H1 (cell line): ENCODE measurements at regions of chr19 and their contacts with region 1.

Region 1: DNA sequence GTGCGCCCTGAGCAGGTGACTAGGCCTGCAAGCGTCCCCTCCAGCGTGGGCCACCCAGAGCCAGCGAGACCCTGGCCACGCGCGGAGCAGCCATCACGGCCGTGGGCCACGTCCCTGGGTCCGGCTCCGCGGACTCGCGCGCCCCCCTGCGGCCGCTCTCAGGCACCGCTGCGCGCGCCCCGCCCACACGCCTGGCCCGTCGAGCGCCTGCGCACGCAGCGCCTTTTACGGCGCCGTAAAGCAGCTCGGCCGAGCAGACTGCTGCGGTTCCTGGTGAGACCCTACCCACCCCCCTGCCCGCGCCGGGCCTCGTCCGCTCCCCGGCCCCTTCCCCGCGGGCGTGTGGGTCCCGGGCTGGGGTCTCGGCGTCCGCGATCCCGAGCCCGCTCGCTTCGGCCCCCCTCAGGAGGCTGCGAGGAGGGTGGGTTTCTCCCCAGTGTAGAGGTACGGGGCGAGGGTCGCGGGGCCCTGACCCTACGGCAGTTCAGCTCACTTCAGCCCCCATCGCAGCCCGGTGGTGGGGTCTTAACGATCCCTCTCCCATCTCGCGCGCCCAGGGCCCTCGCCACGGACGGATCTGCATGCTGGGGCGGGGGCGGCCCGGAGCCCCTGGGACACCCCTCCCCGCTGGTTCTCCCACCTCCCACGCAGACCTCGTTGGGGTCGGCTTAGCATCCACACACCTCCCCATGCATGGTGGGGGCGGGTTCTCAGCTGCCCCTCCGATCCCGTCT is at the start of gene TRAPPC5:
- DNase-seq: peak; percentile 41 to 93
- H3K4me3 ChIP-seq: peak within 1 kb of the TSS; percentile 53 to 98 (median 80)
- H3K27ac ChIP-seq: peak within 1 kb of the TSS; percentile 34; the same call in 1 of the 2 replicates
- H3K4me1 ChIP-seq: peaks cover 0 to 6% (median 4%) of the 10 kb centered on the region in 4 experiments; a peak in 5 of 7 replicates
- H3K27me3 ChIP-seq: peaks cover 0 to 8% (median 3%) of the 10 kb centered on the region in 4 experiments; a peak in 2 of 7 replicates
- CTCF ChIP-seq: peak; percentile 89 to 93 (median 91)
- EP300 ChIP-seq: peak in 1 of 2 experiments; percentile 27; a peak in 1 of 3 replicates
- POLR2A ChIP-seq: no peak; a peak in 1 of 3 replicates
- RAD21 ChIP-seq: peak; percentile 70 to 88
- total RNA-seq, gene TRAPPC5: 99.7 and 109 TPM in 2 replicates

Region 2: DNA sequence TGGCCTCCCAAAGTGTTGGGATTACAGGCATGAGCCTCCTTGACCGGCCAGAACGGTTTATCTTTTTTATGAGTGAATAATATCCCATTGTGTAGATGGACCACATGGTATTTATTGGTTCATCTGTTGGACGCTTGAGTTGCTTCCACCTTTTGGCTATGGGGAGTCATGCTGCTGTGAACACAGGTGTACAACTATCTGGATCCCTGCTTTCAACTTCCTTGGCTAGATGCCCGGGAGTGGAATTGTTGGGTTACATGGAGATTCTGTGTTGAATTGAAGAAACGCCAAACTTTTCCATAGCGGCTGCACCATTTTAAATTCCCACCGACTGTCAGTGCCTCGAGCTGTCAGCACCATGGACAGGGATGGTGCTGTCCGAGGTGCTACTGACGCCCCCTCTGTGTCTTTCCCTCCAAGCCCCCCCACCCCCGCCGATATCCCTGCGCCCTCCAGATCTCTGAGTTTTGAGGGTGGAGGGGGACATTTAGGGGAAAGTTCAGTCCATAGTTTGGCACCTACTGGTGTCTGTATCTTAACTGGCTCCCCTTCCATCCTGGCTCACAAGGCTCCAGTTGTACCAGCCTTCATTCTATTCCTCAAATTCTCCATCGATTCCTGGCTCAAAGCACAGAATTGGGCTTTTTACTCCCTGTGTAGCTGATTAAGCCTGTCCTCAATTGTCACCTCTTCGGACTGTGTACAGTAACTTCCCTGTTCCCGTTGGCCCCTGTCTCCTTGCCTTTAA is 118.0 kb before region 1 on chr19:
- CTCF ChIA-PET with region 1: interaction called, 21 read pairs
- POLR2A ChIA-PET with region 1: no interaction called
- DNase-seq: peak in 1 of 2 experiments; percentile 75
- H3K4me3 ChIP-seq: no peak overlapping the region
- H3K27ac ChIP-seq: no peak overlapping the region
- H3K4me1 ChIP-seq: no peaks in the 10 kb centered on the region
- H3K27me3 ChIP-seq: no peaks in the 10 kb centered on the region
- CTCF ChIP-seq: no peak
- EP300 ChIP-seq: no peak
- POLR2A ChIP-seq: no peak
- RAD21 ChIP-seq: no peak

Region 3: DNA sequence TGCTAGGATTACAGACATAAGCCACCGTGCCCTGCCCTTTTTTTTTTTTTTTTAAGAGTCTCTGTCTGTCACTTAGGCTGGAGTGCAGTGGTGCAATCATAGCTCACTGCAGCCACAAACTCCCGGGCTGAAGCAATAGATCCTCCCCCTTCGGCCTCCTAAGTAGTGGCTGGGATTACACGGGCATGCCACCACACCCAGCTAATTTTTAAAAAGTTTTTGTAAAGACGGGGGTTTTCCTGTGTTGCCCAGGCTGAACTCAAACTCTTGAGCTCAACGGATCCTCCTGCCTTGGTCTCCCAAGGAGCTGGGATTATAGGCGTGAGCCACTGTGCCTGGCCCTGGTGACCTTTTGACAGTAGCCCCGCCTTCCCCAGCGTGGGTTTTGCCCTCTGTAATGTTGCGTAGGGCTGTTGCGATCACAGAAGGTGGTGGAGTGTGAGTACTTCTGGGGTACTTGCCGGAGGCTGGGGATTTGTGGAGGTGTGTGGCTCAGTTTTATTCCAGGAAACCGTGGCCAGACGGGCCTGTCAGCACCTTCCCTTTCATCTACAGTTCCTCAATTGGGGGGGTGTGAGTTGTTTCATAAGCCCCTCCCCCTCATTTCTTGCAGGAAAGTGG is 23.5 kb before region 1 on chr19:
- CTCF ChIA-PET with region 1: interaction called, 13 read pairs
- POLR2A ChIA-PET with region 1: interaction called, 3 read pairs
- DNase-seq: no peak
- H3K4me3 ChIP-seq: no peak overlapping the region
- H3K27ac ChIP-seq: no peak overlapping the region
- H3K4me1 ChIP-seq: peaks cover 0 to 2% (median 0%) of the 10 kb centered on the region in 4 experiments; a peak in 3 of 7 replicates
- H3K27me3 ChIP-seq: peaks cover 2 to 10% (median 4%) of the 10 kb centered on the region in 4 experiments; a peak in 6 of 7 replicates
- CTCF ChIP-seq: no peak
- EP300 ChIP-seq: no peak
- POLR2A ChIP-seq: no peak
- RAD21 ChIP-seq: no peak

Region 4: DNA sequence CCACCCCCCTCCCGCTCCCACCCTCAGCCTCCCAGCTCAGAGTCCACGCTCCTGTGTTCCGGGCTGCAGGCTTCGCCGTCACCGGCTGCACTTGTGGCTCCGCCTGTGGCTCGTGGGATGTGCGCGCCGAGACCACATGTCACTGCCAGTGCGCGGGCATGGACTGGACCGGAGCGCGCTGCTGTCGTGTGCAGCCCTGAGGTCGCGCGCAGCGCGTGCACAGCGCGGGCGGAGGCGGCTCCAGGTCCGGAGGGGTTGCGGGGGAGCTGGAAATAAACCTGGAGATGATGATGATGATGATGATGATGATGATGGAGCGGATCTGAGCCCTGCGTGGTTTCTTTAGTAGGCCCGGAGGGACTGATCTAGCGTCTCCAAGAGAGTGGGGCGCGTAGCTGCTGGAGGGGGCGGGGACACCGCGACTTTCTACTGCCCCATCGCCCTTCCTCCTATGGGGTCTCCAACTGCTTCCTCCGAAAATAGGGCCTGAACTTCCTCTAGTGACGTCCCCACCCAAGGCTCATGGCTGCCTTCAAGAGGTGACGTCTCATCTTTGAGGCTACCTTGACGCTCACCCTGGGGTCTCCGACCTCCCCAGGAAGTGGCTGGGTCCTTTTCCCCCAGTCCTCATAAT is 10.5 kb before region 1 on chr19:
- CTCF ChIA-PET with region 1: interaction called, 32 read pairs
- POLR2A ChIA-PET with region 1: interaction called, 6 read pairs
- DNase-seq: peak in 1 of 2 experiments; percentile 64
- H3K4me3 ChIP-seq: peak overlapping the region; percentile 2 to 70 (median 48)
- H3K27ac ChIP-seq: no peak overlapping the region
- H3K4me1 ChIP-seq: peaks cover 0 to 3% (median 1%) of the 10 kb centered on the region in 4 experiments; a peak in 1 of 7 replicates
- H3K27me3 ChIP-seq: peaks cover 0 to 18% (median 11%) of the 10 kb centered on the region in 4 experiments; a peak in 4 of 7 replicates
- CTCF ChIP-seq: no peak
- EP300 ChIP-seq: no peak
- POLR2A ChIP-seq: no peak
- RAD21 ChIP-seq: no peak

Region 5: DNA sequence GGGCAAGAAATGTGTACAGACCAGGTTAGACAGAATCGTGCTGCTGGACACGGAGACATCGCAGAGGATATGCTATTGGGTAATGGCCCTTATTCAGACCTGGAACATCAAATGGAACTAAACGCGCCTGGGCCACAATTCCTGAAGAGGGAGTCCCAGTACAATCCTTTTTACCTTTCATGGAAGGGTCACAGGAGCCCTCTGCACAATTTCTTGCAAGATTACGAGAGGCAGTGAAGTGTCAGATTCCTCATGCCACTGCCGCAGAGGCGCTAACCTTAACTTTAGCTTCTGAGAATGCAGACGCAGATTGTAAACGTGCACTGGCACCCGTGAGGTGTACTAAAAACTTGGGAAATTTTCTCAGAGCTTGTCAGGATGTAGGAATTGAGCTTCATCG is 100.4 kb after region 1 on chr19:
- CTCF ChIA-PET with region 1: interaction called, 12 read pairs
- POLR2A ChIA-PET with region 1: no interaction called
- DNase-seq: no peak
- H3K4me3 ChIP-seq: no peak overlapping the region
- H3K27ac ChIP-seq: no peak overlapping the region
- H3K4me1 ChIP-seq: peaks cover 0 to 2% (median 1%) of the 10 kb centered on the region in 4 experiments; a peak in 1 of 7 replicates
- H3K27me3 ChIP-seq: no peaks in the 10 kb centered on the region; a peak in 1 of 7 replicates
- CTCF ChIP-seq: no peak; a peak in 1 of 4 replicates
- EP300 ChIP-seq: no peak
- POLR2A ChIP-seq: no peak
- RAD21 ChIP-seq: peak; percentile 18 to 39; a peak in 3 of 4 replicates

Region 6: GRCh38 chr19:7799640-7800355 is 119.0 kb after region 1 on chr19:
- CTCF ChIA-PET with region 1: interaction called, 36 read pairs
- POLR2A ChIA-PET with region 1: interaction called, 3 read pairs
- DNase-seq: peak; percentile 41 to 88
- H3K4me3 ChIP-seq: peak overlapping the region; percentile 23 to 55 (median 32); a peak in 7 of 8 replicates
- H3K27ac ChIP-seq: no peak overlapping the region
- H3K4me1 ChIP-seq: peaks cover 0 to 3% (median 1%) of the 10 kb centered on the region in 4 experiments; a peak in 2 of 7 replicates
- H3K27me3 ChIP-seq: peaks cover 0 to 2% (median 0%) of the 10 kb centered on the region in 4 experiments; a peak in 1 of 7 replicates
- CTCF ChIP-seq: peak in 2 of 3 experiments; percentile 44 to 68; a peak in 3 of 4 replicates
- EP300 ChIP-seq: no peak
- POLR2A ChIP-seq: 0 out of 3 replicates have a peak, but pooled peaks of 1 of the 2 experiments have one; percentile 47
- RAD21 ChIP-seq: peak; percentile 76 to 79